ENCODE measurements at regions of chrX and their contacts with region 1.

Region 1: GRCh38 chrX:52839134-52839533 is 28.0 kb downstream of the XAGE5 start:
- ATAC-seq: no peak
- H3K4me3 ChIP-seq: no peak overlapping the region
- H3K27ac ChIP-seq: no peak overlapping the region
- H3K4me1 ChIP-seq: no peaks in the 10 kb centered on the region

Region 2: GRCh38 chrX:52346512-52347194 is 492.5 kb before region 1 on chrX:
- in situ Hi-C with region 1: loop called in 1 of 9 experiments (anchors 25 kb)
- ATAC-seq: peak in 4 of 8 experiments; percentile 22 to 97 (median 86)
- H3K4me3 ChIP-seq: no peak overlapping the region
- H3K27ac ChIP-seq: no peak overlapping the region
- H3K4me1 ChIP-seq: no peaks in the 10 kb centered on the region

Measured in motor neuron (in vitro differentiated cells).